Activated CD4-positive, alpha-beta T cell treated with anti-CD3 and anti-CD28 coated beads, Interleukin-2, amount 10 ng/mL, durations not matched to agents 24 days and 14 days (primary cell): ENCODE measurements at regions of chr5 and their contacts with region 1.

Region 1: GRCh38 chr5:115450741-115451140 is 93.8 kb downstream of the FEM1C start:
- DNase-seq: no peak
- H3K4me3 Mint-ChIP-seq: no peak overlapping the region
- H3K27ac Mint-ChIP-seq: peak overlapping the region; percentile 21
- H3K4me1 Mint-ChIP-seq: peaks cover 5% of the 10 kb centered on the region
- H3K27me3 Mint-ChIP-seq: peaks cover 2% of the 10 kb centered on the region

Region 2: DNA sequence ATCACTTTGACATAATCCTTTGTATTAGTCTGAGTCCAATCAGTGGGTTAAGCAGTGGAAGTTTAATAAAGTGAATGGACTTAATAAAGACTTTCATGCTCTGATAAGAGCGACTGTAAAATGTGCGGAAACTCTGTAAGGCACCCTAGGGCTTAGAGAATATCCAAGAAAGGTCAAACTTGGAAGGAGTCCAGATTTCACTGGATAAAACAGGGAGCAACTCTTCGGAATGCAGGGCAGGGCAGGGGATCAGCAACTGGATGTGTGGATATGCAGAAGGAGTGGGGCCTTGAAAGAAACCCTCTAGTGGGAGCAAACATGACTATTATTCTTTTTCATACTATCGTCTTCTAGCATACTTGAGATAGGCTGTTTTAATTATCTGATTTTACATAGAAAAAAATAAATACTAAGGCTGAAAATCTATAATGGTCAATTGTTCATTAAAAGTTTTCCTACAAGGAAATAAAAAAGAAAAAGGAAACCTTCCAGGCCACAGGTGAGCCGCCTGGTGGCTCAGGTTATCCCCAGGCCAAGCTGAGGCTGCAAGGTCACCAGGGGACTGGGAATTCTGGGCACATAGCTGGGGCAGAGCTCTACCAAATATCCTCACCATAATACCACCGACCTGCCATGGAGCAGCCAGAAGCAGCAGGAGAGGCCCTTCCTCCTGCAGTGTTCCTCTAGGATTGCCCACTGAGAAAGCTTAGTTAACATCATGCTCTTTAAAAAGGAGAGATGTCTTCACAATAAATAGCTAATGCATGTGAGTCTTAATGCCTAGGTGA is 108.0 kb before region 1 on chr5:
- intact Hi-C with region 1: no loop called
- DNase-seq: no peak
- H3K4me3 Mint-ChIP-seq: no peak overlapping the region
- H3K27ac Mint-ChIP-seq: no peak overlapping the region
- H3K4me1 Mint-ChIP-seq: no peaks in the 10 kb centered on the region
- H3K27me3 Mint-ChIP-seq: peaks cover 22% of the 10 kb centered on the region

Region 3: GRCh38 chr5:115472271-115473025 is 21.7 kb after region 1 on chr5:
- intact Hi-C with region 1: no loop called
- DNase-seq: no peak
- H3K4me3 Mint-ChIP-seq: no peak overlapping the region
- H3K27ac Mint-ChIP-seq: no peak overlapping the region
- H3K4me1 Mint-ChIP-seq: no peaks in the 10 kb centered on the region
- H3K27me3 Mint-ChIP-seq: peaks cover 21% of the 10 kb centered on the region

Region 4: DNA sequence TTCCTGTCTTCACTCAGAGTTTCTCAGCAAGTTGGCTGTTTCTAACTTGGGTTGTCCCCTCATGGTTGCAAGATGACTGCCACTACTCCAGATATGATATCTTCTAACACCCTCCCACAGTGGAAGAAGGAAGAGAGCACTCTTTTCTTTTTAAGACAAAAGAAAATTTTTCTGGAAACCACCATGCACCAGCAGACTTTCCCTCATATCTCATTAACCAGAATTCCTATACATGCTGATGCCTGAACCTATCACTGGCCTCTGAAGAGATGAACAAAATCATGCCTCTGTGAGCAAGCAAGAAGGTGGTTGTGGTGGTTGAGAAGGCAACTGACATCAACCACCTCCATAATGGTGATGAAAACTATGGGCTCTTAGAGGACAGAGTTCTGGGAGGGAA is 37.0 kb after region 1 on chr5:
- intact Hi-C with region 1: loop called (anchors 5 kb)
- DNase-seq: no peak
- H3K4me3 Mint-ChIP-seq: no peak overlapping the region
- H3K27ac Mint-ChIP-seq: peak overlapping the region; percentile 50
- H3K4me1 Mint-ChIP-seq: peaks cover 8% of the 10 kb centered on the region
- H3K27me3 Mint-ChIP-seq: peaks cover under 1% of the 10 kb centered on the region